ENCODE measurements at regions of chr11 and their contacts with region 1.

Region 1: DNA sequence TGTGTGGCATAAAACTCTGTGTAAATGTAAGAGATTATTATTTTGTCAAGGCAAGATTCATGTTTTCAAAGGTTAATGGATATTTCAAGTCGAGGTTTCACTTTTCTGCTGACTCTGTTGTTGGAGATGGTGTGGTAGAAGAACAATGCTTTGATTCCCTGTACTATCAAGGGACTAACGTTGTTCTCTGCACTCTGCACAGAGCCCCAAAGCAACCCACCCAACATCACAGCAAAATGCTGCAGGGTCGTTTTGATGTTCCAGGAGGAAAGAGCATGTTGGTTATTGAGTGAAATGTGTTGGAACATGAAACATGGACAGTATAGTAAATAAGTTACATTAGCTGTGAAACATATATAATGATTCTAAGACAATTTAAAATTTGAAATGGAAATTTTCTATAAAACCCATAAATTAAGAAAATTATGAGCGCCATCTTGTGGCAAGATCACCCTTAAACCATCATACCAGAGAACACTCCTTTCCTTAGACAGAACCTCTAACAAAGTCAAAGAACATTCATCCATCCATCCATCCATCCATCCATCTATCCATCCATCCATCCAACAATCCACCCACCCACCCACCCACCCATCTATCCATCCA is 164.4 kb upstream of the ZBED5 start:
- DNase-seq: no peak
- H3K4me3 ChIP-seq: no peak overlapping the region
- H3K27ac ChIP-seq: no peak overlapping the region
- H3K27me3 ChIP-seq: no peaks in the 10 kb centered on the region
- CTCF ChIP-seq: peak; percentile 29 to 78 (median 60)

Region 2: DNA sequence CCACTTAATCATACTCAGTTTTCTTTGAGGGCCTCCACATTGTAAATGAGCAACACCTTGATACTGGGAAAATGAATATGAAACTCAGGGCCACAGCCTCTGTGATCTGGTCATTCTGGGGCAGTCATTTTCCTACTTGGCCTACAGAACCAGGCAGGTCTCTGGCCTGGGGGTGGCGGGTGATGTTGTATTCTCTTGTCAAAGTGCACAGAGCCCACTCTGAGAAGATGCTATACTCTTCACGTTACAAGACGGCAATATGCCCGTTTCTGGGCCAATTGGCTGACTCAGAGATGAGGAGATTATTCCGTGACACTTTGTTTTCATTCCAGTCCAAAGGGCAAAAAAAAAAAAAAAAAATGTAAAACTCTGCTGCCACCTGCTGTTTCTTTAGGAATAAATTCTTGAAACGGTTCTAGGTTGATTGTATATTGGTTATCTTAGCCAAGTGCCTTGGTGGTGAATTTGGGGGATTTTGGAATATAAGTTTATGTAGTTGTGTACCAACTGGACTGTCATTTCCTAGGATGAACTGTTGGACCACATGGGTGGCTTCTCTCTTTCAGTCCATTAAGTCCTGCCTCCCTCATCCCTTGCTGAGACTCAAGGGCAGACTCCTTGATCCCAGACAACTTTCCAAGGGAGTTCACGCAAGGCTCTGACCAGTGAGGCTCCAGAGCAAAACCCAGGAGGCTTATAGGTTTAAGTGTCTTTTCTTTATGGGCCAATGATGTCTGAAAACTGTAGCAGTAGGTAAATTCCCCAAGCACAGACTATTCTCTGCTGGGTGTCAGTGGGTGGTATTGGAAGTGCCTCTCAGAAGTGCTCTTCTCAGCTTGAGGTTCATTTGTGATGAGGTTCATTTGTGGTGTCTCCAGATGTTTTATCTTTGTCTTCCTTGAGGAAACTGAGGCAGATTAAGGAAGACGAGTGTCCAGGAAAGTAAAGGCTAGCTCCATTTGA is 699.1 kb before region 1 on chr11:
- intact Hi-C with region 1: no loop called
- DNase-seq: peak in 1 of 10 donors; percentile 21
- H3K4me3 ChIP-seq: peak overlapping the region in 8 of 59 donors; percentile 3 to 35 (median 21)
- H3K27ac ChIP-seq: peak overlapping the region in 13 of 59 donors; percentile 4 to 68 (median 31)
- H3K27me3 ChIP-seq: no peaks in the 10 kb centered on the region
- CTCF ChIP-seq: peak; percentile 53 to 82 (median 68)

Region 3: DNA sequence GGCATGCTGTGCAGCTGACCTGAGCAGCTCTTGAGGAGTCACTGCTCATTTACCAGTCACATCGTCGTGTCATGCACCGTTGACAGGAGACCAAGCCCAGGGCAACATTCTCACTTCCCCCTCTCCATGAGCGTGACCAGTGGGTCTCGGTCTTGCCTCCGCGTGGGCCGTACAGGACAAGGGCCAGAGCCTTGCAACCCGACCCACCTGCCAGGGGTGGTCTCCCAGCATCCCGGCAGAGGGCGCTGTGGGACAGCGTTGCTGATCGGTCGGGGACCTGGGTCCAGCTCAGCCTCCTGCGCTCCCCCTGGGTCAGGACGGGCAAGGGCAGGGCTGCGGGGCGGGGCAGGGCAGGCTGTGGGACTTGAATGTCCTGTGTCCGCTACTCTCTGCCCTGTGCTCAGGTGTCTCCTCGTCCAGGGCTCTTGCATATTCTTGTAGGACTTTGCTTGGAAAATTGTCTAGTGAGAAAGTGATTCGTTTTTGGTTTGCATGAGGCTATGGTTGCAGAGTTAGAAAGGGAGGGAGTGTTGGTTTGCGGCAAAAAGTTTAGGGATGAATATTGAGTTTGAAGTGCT is 229.7 kb before region 1 on chr11:
- intact Hi-C with region 1: loop called in 1 of 2 experiments (anchors 5 kb)
- DNase-seq: peak; percentile 47 to 83 (median 68)
- H3K4me3 ChIP-seq: peak overlapping the region in 27 of 59 donors; percentile 4 to 51 (median 29)
- H3K27ac ChIP-seq: no peak overlapping the region
- H3K27me3 ChIP-seq: no peaks in the 10 kb centered on the region
- CTCF ChIP-seq: peak; percentile 33 to 91 (median 84)

Region 4: GRCh38 chr11:10920205-10920604 is 102.0 kb before region 1 on chr11:
- intact Hi-C with region 1: no loop called
- DNase-seq: no peak
- H3K4me3 ChIP-seq: no peak overlapping the region
- H3K27ac ChIP-seq: no peak overlapping the region
- H3K27me3 ChIP-seq: no peaks in the 10 kb centered on the region
- CTCF ChIP-seq: no peak

Region 5: GRCh38 chr11:11000579-11001283 is 21.5 kb before region 1 on chr11:
- intact Hi-C with region 1: no loop called
- DNase-seq: no peak
- H3K4me3 ChIP-seq: no peak overlapping the region
- H3K27ac ChIP-seq: no peak overlapping the region
- H3K27me3 ChIP-seq: peaks cover 0 to 20% (median 0%) of the 10 kb centered on the region in 45 donors
- CTCF ChIP-seq: no peak

Region 6: DNA sequence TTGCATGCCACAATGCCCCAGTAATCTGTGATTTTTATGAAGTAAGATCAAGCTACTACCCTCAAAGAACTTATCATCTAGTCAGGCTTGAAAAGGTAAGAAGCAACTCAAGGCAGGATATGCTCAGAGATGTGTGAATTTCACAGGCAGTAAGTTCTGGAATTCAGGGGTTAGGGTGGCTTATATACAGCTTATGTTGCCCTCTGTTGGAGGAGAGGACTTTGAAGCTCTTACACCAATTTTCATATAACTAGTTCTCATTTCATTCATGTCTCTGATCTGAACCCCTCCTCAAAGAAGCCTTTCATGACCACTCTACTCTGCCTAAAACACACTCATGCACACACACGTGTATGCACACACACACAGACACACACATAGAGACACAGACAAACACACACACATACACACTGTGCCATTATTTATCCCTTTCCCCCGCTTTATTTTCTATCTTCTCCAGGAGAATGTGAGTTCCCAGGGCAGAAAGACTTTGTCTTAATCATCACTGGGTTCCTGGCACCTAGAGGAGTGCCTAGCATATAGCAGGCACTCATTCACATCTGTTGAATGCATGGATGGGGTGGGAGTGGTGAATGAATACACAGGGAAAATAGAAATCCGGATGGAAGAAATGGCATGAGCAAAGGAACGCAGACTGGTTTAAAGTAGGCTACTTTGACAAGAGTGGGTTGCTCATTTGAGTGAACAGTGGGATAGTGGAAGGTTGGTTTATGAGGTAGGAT is 56.3 kb after region 1 on chr11:
- intact Hi-C with region 1: no loop called
- DNase-seq: no peak
- H3K4me3 ChIP-seq: no peak overlapping the region
- H3K27ac ChIP-seq: no peak overlapping the region
- H3K27me3 ChIP-seq: no peaks in the 10 kb centered on the region
- CTCF ChIP-seq: peak in 2 of 56 donors; percentile 8 to 21

Measured in dorsolateral prefrontal cortex (tissue), 120 donors.